CD4-positive, alpha-beta memory T cell (primary cell): ENCODE measurements at regions of chr14 and their contacts with region 1.

Region 1: DNA sequence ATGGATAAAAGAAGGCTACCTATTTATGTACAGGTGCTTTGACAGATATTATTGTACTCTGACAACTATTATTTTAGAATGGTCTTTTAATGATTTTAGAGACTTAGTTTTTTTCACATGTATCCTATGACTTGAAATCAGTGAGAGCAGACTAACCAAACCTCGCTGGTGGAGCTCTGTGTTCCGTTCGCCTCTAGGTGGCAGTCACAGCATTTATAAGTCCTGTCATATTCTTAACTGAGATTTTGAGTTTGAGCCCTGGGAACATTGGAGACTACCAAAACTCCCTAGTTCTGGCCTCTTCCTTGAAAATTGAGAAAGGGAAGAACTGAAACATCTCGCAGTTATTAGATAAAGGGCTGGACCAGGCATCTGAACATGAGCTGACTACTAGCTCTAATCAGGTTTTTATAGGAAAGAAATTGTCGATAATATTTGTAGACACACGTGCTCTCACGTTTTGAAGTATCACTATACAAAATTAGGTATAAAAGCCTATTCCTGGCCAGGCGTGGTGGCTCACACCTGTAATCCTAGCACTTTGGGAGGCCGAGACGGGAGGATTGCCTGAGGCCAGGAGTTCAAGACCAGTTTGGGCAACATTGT is 48.3 kb downstream of the TTLL5 start:
- DNase-seq: peak; percentile 49 to 60 (median 56)
- H3K4me3 ChIP-seq: no peak overlapping the region
- H3K4me3 Mint-ChIP-seq: no peak overlapping the region
- H3K27ac ChIP-seq: no peak overlapping the region
- H3K27ac Mint-ChIP-seq: no peak overlapping the region
- H3K4me1 ChIP-seq: no peaks in the 10 kb centered on the region
- H3K4me1 Mint-ChIP-seq: no peaks in the 10 kb centered on the region
- H3K27me3 ChIP-seq: no peaks in the 10 kb centered on the region
- H3K27me3 Mint-ChIP-seq: no peaks in the 10 kb centered on the region

Region 2: DNA sequence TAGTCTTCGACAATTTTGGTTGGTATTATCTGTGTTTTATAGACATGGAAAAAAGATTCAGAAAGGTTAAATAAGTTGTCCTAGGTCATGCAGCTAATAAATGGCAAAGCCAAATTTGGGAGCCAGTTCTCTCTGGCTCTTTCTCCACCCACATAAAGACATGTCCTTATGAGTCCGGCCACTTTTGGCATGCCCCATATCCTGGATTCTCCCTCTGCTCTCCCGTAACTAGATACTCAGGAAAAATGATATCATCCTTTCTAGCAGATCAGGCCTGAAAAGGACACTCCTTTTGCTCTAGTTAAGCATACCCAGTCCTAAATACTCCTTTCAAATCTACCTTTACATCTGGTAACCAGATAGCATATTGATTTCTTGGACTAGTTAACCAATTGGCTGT is 16.2 kb after region 1 on chr14:
- CTCF ChIA-PET with region 1: interaction called, 10 read pairs
- POLR2A ChIA-PET with region 1: interaction called, 3 read pairs
- intact Hi-C with region 1: no loop called
- DNase-seq: no peak
- H3K4me3 ChIP-seq: no peak overlapping the region
- H3K4me3 Mint-ChIP-seq: no peak overlapping the region
- H3K27ac ChIP-seq: no peak overlapping the region
- H3K27ac Mint-ChIP-seq: no peak overlapping the region
- H3K4me1 ChIP-seq: no peaks in the 10 kb centered on the region
- H3K4me1 Mint-ChIP-seq: peaks cover 6 to 12% (median 7%) of the 10 kb centered on the region in 4 donors
- H3K27me3 ChIP-seq: no peaks in the 10 kb centered on the region
- H3K27me3 Mint-ChIP-seq: no peaks in the 10 kb centered on the region

Region 3: DNA sequence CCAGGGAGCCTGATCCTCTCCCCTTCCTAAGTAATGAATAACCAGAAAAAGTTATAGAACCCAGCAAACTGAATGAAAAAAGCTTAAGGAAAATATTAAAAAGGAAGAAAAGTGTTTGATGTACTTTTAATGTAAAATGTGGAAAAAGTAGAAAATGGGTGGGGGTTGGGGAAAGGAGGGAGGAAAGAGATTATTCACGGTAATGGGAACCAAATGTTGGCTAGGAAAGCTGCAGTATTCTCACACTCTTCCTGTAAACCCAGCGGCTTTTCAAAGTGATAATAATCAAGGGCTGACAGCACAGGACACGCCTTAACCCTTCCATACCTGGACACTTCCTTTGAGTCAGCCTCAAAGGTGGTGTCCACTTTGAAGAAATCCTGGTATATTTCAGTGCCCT is 133.2 kb after region 1 on chr14:
- CTCF ChIA-PET with region 1: no interaction called
- POLR2A ChIA-PET with region 1: no interaction called
- intact Hi-C with region 1: no loop called
- DNase-seq: no peak
- H3K4me3 ChIP-seq: no peak overlapping the region
- H3K4me3 Mint-ChIP-seq: no peak overlapping the region
- H3K27ac ChIP-seq: no peak overlapping the region
- H3K27ac Mint-ChIP-seq: no peak overlapping the region
- H3K4me1 ChIP-seq: no peaks in the 10 kb centered on the region
- H3K4me1 Mint-ChIP-seq: no peaks in the 10 kb centered on the region
- H3K27me3 ChIP-seq: no peaks in the 10 kb centered on the region
- H3K27me3 Mint-ChIP-seq: no peaks in the 10 kb centered on the region

Region 4: DNA sequence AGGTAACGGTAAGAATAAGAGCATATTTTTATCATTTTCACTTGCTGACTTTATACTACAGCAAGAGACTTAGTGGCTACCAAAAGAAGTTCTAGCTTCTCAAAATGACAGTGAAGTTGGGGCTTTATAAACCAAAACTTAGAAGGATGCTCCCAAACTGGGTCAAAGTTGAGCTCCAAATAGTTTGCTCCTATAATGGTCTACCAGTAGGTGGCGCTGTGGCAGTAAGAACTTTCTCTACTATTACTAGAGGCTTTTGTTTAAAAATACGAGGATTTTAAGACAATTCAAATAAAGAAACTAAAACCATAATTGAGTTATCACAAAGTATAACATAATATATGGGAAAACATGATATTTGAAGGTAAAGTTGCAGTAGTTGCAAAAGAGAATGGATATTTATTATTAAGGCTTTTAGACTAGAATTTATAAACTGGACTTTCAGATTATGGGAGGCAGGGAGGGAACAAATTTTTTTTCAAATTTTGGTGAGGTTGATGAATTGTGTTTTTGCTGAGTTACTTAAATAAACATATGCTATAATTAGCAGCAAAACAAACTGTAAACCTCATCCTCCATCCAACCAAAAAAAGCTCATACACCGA is 197.5 kb after region 1 on chr14:
- CTCF ChIA-PET with region 1: interaction called, 24 read pairs
- POLR2A ChIA-PET with region 1: no interaction called
- intact Hi-C with region 1: no loop called
- DNase-seq: peak; percentile 48 to 64 (median 54)
- H3K4me3 ChIP-seq: no peak overlapping the region
- H3K4me3 Mint-ChIP-seq: no peak overlapping the region
- H3K27ac ChIP-seq: no peak overlapping the region
- H3K27ac Mint-ChIP-seq: peak overlapping the region in 2 of 7 donors; percentile 3 to 15
- H3K4me1 ChIP-seq: no peaks in the 10 kb centered on the region
- H3K4me1 Mint-ChIP-seq: no peaks in the 10 kb centered on the region
- H3K27me3 ChIP-seq: no peaks in the 10 kb centered on the region
- H3K27me3 Mint-ChIP-seq: no peaks in the 10 kb centered on the region

Region 5: DNA sequence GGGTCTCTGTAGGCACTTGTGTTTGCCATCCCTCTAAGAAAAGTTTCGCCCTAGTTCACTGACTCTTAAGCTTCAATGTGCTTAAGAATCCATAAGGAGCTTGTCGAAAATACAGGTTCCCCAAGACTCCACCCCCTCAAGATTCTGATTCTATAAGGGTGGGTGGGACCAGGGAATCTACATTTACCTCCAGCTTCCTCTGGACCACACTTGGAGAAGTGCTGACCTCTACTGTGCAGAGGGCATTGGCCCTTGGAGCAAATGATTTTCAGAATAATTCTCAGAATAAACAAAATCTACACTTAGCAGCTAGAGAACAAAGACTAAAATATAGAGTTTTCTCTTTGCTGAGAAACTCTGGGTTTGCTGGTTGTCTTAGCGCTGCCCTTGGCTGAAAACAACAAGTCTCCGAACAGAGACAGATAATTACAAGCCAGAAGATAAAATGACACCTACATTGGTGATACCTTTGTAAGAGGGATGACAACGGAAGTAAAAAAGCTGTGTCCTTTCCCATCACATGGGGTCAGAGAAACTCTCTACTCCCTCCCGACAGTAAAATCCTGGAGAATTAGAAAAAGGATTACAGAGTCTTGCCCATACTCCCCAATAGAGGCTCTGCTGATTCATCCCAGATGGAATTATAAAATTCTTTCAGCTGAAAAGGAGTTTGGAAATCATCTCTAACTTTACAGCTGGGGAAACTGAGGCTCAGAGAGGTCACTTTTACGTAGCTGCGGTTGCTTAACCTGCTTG is 267.7 kb after region 1 on chr14:
- CTCF ChIA-PET with region 1: interaction called, 126 read pairs
- POLR2A ChIA-PET with region 1: interaction called, 7 read pairs
- intact Hi-C with region 1: no loop called
- DNase-seq: no peak
- H3K4me3 ChIP-seq: no peak overlapping the region
- H3K4me3 Mint-ChIP-seq: no peak overlapping the region
- H3K27ac ChIP-seq: no peak overlapping the region
- H3K27ac Mint-ChIP-seq: no peak overlapping the region
- H3K4me1 ChIP-seq: peaks cover 31% of the 10 kb centered on the region
- H3K4me1 Mint-ChIP-seq: peaks cover 18 to 43% (median 31%) of the 10 kb centered on the region in 4 donors
- H3K27me3 ChIP-seq: no peaks in the 10 kb centered on the region
- H3K27me3 Mint-ChIP-seq: no peaks in the 10 kb centered on the region

Region 6: GRCh38 chr14:75982266-75983018 is 273.1 kb after region 1 on chr14:
- CTCF ChIA-PET with region 1: interaction called, 126 read pairs
- POLR2A ChIA-PET with region 1: interaction called, 7 read pairs
- intact Hi-C with region 1: no loop called
- DNase-seq: peak; percentile 79 to 82 (median 80)
- H3K4me3 ChIP-seq: peak overlapping the region; percentile 29 to 72
- H3K4me3 Mint-ChIP-seq: peak overlapping the region; percentile 78 to 93 (median 89)
- H3K27ac ChIP-seq: peak overlapping the region; percentile 71
- H3K27ac Mint-ChIP-seq: peak overlapping the region; percentile 78 to 95 (median 93)
- H3K4me1 ChIP-seq: peaks cover 44% of the 10 kb centered on the region
- H3K4me1 Mint-ChIP-seq: peaks cover 27 to 68% (median 50%) of the 10 kb centered on the region in 4 donors
- H3K27me3 ChIP-seq: no peaks in the 10 kb centered on the region
- H3K27me3 Mint-ChIP-seq: no peaks in the 10 kb centered on the region

Region 7: DNA sequence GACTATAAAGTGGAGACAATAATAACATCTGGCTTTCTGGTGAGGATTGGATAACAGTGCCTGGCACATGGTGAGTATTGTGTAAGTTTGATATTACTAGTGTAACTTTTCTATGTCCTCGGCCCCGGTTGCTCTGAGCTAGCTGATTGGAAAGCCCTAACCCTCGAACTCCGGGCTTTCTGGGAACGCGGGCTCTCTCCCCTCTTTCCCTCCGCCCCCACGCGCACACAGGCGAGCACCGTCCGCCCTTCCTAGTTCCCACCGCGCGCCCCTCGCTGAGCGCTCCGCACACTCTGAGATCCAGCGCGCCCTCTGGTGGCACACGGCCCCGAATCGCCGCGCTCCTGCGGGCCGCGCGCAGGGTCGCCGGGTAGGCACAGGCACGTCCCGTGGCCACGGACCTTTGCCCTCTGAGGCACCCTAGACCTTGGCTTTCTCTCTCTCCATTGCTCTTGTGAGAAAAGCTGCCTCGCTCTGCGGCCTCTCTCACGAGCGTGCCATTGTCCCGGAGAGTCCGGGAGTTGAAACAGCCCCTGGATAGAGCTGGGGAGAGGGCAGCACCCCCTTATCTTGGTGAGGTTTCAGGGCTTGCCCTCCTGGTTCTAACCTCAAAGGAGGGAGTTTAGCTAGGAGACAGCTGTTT is 643.5 kb after region 1 on chr14:
- CTCF ChIA-PET with region 1: interaction called, 8 read pairs
- POLR2A ChIA-PET with region 1: no interaction called
- intact Hi-C with region 1: loop called (anchors 5 kb)
- DNase-seq: peak in 4 of 5 donors; percentile 13 to 41 (median 28)
- H3K4me3 ChIP-seq: no peak overlapping the region
- H3K4me3 Mint-ChIP-seq: peak overlapping the region in 3 of 8 donors; percentile 51 to 66 (median 57)
- H3K27ac ChIP-seq: no peak overlapping the region
- H3K27ac Mint-ChIP-seq: no peak overlapping the region
- H3K4me1 ChIP-seq: peaks cover 5% of the 10 kb centered on the region
- H3K4me1 Mint-ChIP-seq: peaks cover 0 to 14% (median 4%) of the 10 kb centered on the region in 4 donors
- H3K27me3 ChIP-seq: no peaks in the 10 kb centered on the region
- H3K27me3 Mint-ChIP-seq: peaks cover 20 to 37% of the 10 kb centered on the region in 2 donors

Region 8: DNA sequence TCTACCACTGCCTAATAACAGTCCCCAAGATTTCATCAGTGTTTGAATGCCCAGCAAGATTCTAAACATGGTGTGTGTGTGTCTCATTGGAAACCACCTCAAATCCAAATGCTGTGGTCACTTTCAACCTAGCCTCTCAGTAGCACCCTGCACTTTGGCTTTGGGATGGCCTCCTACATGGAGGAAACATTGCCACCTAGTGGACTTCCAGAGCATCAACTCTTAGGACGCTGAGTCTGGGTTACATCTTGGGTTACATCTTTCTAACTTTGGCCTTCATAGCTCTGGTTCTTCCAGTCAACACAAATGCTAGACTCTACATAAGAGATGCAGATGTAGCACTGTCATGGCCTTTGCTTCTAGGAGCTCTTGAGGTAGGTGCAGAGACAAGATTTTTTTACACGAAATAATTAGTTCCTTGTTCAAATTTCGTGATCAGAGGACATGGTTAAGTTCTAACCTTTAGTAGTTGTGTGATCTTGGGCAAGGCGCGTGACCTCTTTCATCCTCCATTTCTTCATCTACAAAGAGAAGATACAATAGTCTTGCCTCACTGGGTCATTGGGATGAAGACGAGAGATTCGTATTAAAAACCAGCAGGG is 938.5 kb after region 1 on chr14:
- CTCF ChIA-PET with region 1: interaction called, 3 read pairs
- POLR2A ChIA-PET with region 1: no interaction called
- intact Hi-C with region 1: loop called (anchors 5 kb)
- DNase-seq: peak in 4 of 5 donors; percentile 6 to 34 (median 12)
- H3K4me3 ChIP-seq: no peak overlapping the region
- H3K4me3 Mint-ChIP-seq: no peak overlapping the region
- H3K27ac ChIP-seq: no peak overlapping the region
- H3K27ac Mint-ChIP-seq: no peak overlapping the region
- H3K4me1 ChIP-seq: no peaks in the 10 kb centered on the region
- H3K4me1 Mint-ChIP-seq: no peaks in the 10 kb centered on the region
- H3K27me3 ChIP-seq: peaks cover 3% of the 10 kb centered on the region
- H3K27me3 Mint-ChIP-seq: peaks cover 5 to 11% of the 10 kb centered on the region in 2 donors